Esophagus squamous epithelium (tissue), 5 donors: ENCODE measurements at regions of chr2 and their contacts with region 1.

Region 1: GRCh38 chr2:9142551-9143263 is 63.9 kb upstream of the ASAP2 start:
- DNase-seq: no peak
- H3K4me3 ChIP-seq: peak overlapping the region in 3 of 4 donors; percentile 5 to 46 (median 29)
- H3K27ac ChIP-seq: peak overlapping the region in 3 of 4 donors; percentile 22 to 68 (median 62)
- H3K4me1 ChIP-seq: peaks cover 0 to 34% (median 13%) of the 10 kb centered on the region in 3 donors
- H3K27me3 ChIP-seq: peaks cover 0 to 27% (median 0%) of the 10 kb centered on the region in 4 donors
- CTCF ChIP-seq: peak; percentile 98 to 100 (median 100)
- POLR2A ChIP-seq: no peak

Region 2: DNA sequence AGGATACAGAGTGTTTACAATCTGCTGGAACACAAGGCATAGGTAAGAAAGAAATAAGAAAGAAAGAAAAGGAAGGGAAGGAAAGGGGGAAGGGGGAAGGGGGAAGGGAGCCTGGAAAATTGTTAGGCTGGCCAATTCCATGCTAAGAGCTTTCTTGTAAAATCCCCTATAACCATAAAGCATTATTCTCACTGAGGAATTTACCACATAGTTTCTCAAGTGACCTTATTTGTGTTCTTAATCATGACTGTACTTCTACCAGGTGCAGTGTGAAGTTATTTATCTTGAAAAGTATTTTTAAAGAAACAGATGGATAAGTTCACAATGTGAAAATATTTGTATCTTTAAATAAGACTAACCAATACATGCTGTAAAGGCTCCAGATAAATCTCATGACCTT is 266.1 kb before region 1 on chr2:
- intact Hi-C with region 1: loop called (anchors 5 kb)
- DNase-seq: no peak
- H3K4me3 ChIP-seq: no peak overlapping the region
- H3K27ac ChIP-seq: no peak overlapping the region
- H3K4me1 ChIP-seq: no peaks in the 10 kb centered on the region
- H3K27me3 ChIP-seq: no peaks in the 10 kb centered on the region
- CTCF ChIP-seq: no peak
- POLR2A ChIP-seq: no peak

Region 3: GRCh38 chr2:9333591-9334171 is 191.0 kb after region 1 on chr2:
- intact Hi-C with region 1: loop called (anchors 10 kb)
- DNase-seq: no peak
- H3K4me3 ChIP-seq: no peak overlapping the region
- H3K27ac ChIP-seq: peak overlapping the region in 1 of 4 donors; percentile 18
- H3K4me1 ChIP-seq: peaks cover 5 to 30% (median 8%) of the 10 kb centered on the region in 3 donors
- H3K27me3 ChIP-seq: no peaks in the 10 kb centered on the region
- CTCF ChIP-seq: peak; percentile 26 to 86 (median 70)
- POLR2A ChIP-seq: no peak